ENCODE measurements at regions of chr11 and their contacts with region 1.

Region 1: DNA sequence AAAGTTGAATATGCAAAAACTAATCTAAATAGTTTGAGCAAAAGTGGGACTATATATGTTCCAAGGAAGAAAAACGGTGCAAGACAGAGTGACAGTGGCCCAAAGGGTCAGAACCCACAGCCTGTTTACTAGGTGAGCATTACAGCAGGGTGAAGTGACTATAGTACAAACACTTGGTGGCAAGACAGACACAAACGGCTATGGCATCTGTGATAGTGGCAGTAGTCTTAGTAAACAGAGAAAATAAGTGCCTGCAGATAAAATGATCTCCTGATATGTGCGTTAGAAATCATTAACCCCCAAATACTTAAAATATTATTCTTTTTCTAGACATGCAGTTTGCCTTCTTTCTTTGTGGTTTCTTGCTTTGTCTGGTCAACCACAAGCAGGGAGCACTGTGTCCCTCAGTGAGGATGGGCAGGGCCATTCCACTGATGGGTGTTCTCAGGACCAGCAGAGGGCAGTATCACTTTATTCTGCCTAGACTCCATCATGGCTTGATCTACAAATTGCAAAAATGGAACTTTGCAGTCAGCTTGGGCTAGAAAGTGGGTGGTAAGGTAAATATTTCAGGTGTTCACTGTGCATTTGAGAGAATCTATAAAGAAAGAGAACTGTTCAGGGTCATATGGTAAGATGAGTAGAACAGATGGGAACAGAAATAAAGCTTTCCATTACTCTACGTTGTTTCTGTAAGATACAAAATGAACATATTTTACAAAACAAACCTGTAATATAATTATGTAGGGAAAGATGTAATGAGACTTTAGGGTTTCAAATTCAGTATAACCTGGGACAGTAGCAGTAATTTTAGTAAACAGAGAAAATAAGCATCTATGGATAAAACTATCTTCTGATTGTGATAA is 198.2 kb downstream of the SWAP70 start:
- DNase-seq: peak; percentile 20
- H3K4me3 Mint-ChIP-seq: no peak overlapping the region
- H3K27ac Mint-ChIP-seq: no peak overlapping the region
- H3K4me1 Mint-ChIP-seq: peaks cover 32% of the 10 kb centered on the region
- H3K27me3 Mint-ChIP-seq: peaks cover 4% of the 10 kb centered on the region

Region 2: GRCh38 chr11:9840460-9841004 is 21.6 kb before region 1 on chr11:
- intact Hi-C with region 1: loop called (anchors 1 kb)
- DNase-seq: no peak
- H3K4me3 Mint-ChIP-seq: no peak overlapping the region
- H3K27ac Mint-ChIP-seq: peak overlapping the region; percentile 3
- H3K4me1 Mint-ChIP-seq: peaks cover 38% of the 10 kb centered on the region
- H3K27me3 Mint-ChIP-seq: no peaks in the 10 kb centered on the region

Region 3: DNA sequence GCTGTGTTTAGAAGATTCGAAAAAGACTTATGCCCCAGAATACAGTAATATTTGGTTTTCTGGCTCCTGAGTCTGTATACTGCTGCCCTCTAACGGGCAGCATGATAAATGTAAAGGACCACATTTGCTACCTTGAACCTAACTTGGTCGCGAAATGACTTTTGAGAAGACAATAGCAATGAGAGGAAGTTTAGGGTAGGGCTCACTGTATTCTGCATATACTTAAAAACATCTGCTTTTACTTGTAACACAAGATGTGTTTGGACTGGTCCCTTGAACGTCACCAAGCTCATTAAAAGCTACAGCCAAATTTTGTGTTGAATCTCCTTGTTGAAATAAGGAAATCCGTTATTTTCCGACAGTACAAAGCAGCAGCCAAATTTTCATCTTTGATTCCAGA is 110.9 kb after region 1 on chr11:
- intact Hi-C with region 1: loop called (anchors 2 kb)
- DNase-seq: no peak
- H3K4me3 Mint-ChIP-seq: no peak overlapping the region
- H3K27ac Mint-ChIP-seq: no peak overlapping the region
- H3K4me1 Mint-ChIP-seq: peaks cover 2% of the 10 kb centered on the region
- H3K27me3 Mint-ChIP-seq: no peaks in the 10 kb centered on the region

Region 4: DNA sequence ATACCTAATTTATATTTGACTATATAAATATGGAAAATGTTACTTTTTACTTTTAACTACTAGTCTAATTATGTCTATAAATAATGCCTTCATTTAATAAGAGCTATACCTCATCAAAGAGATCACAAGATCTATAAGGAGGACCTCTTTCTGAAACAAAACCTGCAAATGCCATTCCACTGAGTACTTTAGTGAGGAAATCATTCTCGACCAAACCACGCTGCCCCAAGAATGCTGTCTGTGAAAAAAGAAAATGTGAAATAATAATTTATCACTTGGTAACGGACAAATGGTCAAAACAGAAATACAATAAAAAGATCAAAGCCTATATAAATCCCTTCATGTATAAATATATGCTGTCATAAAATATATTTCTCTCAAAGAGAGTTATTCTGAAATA is 130.2 kb after region 1 on chr11:
- intact Hi-C with region 1: no loop called
- DNase-seq: no peak
- H3K4me3 Mint-ChIP-seq: no peak overlapping the region
- H3K27ac Mint-ChIP-seq: no peak overlapping the region
- H3K4me1 Mint-ChIP-seq: no peaks in the 10 kb centered on the region
- H3K27me3 Mint-ChIP-seq: no peaks in the 10 kb centered on the region

Region 5: DNA sequence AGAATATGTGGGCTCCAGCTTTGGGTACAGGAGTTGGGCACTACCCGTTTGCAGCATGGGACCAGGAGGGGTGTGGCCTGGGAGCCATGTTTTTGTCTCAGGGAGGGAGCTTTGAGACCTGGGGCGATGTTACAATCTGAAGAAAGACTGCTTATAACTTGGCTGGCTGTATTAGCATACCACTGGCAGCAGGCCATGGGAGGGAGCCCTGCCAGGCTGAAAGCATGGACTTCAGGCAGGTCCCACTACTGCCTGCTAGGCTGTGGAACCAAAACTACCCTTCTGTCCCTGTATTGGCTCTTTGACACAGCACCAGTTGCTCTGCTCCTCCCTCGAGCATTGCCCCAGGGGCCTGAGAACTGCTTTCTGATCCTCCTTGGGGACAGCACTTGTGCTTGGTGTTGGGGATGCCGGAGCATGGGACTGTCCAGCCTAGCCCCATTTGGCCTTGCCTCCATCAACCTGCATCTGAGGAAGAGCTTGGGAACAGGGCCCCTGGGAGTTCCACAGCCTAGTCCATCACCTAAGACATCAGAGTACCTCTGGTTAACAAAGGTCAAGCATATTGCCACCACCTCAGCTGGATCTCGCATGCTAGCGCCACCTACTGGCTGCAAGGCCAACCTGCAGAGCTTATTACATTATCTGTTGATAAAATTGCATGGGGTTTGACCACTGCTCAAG is 214.5 kb after region 1 on chr11:
- intact Hi-C with region 1: loop called (anchors 5 kb)
- DNase-seq: peak; percentile 12
- H3K4me3 Mint-ChIP-seq: no peak overlapping the region
- H3K27ac Mint-ChIP-seq: no peak overlapping the region
- H3K4me1 Mint-ChIP-seq: no peaks in the 10 kb centered on the region
- H3K27me3 Mint-ChIP-seq: peaks cover 2% of the 10 kb centered on the region

Region 6: GRCh38 chr11:10139143-10139542 is 277.1 kb after region 1 on chr11:
- intact Hi-C with region 1: no loop called
- DNase-seq: no peak
- H3K4me3 Mint-ChIP-seq: no peak overlapping the region
- H3K27ac Mint-ChIP-seq: no peak overlapping the region
- H3K4me1 Mint-ChIP-seq: no peaks in the 10 kb centered on the region
- H3K27me3 Mint-ChIP-seq: no peaks in the 10 kb centered on the region

Region 7: DNA sequence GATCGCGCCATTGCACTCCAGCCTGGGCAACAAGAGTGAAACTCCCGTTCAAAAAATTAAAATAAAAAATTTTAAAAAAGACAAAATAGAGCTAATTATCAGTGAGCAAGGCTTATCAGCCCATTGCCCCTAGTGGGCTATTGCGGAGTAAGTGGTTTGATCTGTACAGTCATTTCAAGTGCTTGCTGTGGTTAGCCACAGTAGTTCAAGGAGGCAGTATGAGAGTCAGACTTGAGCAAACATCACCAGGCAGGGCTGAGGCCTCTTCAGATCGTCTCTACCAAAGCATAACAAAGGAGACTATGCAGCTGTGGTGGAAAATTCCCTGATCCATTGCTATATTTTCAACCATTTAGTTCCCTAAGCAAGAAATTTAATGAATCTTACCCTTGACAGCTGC is 436.2 kb after region 1 on chr11:
- intact Hi-C with region 1: loop called (anchors 1 kb)
- DNase-seq: peak; percentile 61
- H3K4me3 Mint-ChIP-seq: no peak overlapping the region
- H3K27ac Mint-ChIP-seq: no peak overlapping the region
- H3K4me1 Mint-ChIP-seq: peaks cover 33% of the 10 kb centered on the region
- H3K27me3 Mint-ChIP-seq: peaks cover 67% of the 10 kb centered on the region

Measured in activated T-helper 2 cell treated with anti-CD3 and anti-CD28 coated beads, Interferon-gamma antibody, Interleukin-2, Interleukin-4, amounts not matched to agents 10 μg/mL and 5 μg/mL and 100 μg/mL, durations not matched to agents 14 hours and 24 hours and 36 hours (primary cell).